ENCODE measurements at regions of chr6 and their contacts with region 1.

Region 1: DNA sequence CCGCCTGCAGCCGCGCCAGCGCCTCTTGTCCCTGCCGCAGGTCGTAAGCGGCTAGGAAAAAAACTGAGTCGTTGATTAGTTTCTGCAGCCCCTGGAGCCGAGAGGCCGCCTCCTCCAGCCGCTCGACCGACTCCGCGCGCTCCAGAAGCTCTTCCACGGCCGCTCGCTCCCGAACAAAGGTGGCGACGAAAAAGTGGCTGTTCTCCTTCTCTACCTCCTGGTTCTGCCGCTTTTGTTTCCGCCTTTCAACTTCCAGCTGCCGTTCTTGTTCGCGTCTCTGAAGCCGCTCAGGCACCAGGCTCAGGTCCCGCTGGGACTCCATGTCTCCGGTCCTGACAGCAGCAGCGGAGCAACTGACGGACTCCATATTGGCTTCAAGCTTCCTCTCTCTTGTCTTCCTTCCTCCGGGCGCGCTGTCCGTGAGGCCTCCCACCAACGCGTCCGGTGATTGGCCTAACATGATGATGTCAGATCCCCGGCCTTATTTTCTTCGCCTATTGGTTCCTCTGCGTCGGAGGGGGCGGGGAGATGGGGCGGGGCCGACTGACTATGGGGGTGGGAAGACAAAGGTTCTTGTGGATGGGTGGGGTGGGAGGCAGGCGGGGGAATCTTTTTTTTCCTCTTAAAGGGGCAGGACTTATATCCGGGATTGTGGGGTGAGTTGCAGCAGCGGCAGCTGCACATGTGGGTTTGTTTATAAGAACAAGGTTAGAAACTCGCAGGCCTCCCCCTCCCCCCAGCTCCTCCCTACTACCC is at the start of gene TBCC:
- DNase-seq: peak; percentile 87 to 98 (median 93)
- ATAC-seq: peak; percentile 82
- H3K4me3 ChIP-seq: peak within 1 kb of the TSS; percentile 76 to 84
- H3K4me3 Mint-ChIP-seq: peak within 1 kb of the TSS; percentile 100
- H3K27ac ChIP-seq: peak within 1 kb of the TSS; percentile 86 to 89
- H3K27ac Mint-ChIP-seq: peak within 1 kb of the TSS; percentile 100
- H3K4me1 ChIP-seq: peaks cover 36% of the 10 kb centered on the region
- H3K4me1 Mint-ChIP-seq: peaks cover 27% of the 10 kb centered on the region
- H3K27me3 ChIP-seq: no peaks in the 10 kb centered on the region
- H3K27me3 Mint-ChIP-seq: no peaks in the 10 kb centered on the region
- CTCF ChIP-seq: no peak
- total RNA-seq, gene TBCC: 70.5 to 74.1 TPM

Region 2: DNA sequence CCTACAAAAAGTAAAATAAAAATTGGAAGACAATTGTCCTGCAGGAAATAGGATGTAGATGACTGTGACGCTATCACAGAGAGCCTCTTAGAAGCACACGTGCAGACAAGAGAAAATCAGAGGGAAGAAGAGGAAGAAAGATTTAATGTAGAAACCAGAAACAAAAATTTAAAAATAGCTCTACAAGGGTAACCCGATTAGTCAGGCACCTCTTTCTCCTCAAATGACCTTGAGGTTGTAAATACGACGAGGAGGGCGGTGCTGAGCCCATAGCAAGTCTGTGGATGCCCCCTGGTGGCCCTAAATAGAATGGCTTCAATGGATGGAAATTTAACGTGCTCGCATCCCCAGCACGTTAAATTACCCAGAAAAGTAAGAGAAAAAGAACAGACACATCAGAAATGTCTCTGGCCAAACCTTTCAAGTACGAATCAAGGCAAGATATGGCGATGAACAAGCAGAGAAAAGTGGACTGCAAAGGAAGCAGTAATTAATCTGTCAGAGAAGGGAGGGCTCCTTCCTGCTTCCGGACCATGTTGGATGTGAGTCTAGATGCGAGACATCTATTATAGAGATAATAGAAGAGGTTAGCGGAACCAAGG is 19.3 kb before region 1 on chr6:
- CTCF ChIA-PET with region 1: interaction called, 27 read pairs
- POLR2A ChIA-PET with region 1: interaction called, 26 read pairs
- intact Hi-C with region 1: loop called (anchors 1 to 2 kb)
- DNase-seq: peak; percentile 29 to 95 (median 76)
- ATAC-seq: peak; percentile 98
- H3K4me3 ChIP-seq: peak overlapping the region; percentile 54 to 73
- H3K4me3 Mint-ChIP-seq: peak overlapping the region; percentile 88
- H3K27ac ChIP-seq: peak overlapping the region; percentile 75 to 85
- H3K27ac Mint-ChIP-seq: peak overlapping the region; percentile 97
- H3K4me1 ChIP-seq: peaks cover 13% of the 10 kb centered on the region
- H3K4me1 Mint-ChIP-seq: peaks cover 17% of the 10 kb centered on the region
- H3K27me3 ChIP-seq: no peaks in the 10 kb centered on the region
- H3K27me3 Mint-ChIP-seq: no peaks in the 10 kb centered on the region
- CTCF ChIP-seq: peak; percentile 88

Region 3: DNA sequence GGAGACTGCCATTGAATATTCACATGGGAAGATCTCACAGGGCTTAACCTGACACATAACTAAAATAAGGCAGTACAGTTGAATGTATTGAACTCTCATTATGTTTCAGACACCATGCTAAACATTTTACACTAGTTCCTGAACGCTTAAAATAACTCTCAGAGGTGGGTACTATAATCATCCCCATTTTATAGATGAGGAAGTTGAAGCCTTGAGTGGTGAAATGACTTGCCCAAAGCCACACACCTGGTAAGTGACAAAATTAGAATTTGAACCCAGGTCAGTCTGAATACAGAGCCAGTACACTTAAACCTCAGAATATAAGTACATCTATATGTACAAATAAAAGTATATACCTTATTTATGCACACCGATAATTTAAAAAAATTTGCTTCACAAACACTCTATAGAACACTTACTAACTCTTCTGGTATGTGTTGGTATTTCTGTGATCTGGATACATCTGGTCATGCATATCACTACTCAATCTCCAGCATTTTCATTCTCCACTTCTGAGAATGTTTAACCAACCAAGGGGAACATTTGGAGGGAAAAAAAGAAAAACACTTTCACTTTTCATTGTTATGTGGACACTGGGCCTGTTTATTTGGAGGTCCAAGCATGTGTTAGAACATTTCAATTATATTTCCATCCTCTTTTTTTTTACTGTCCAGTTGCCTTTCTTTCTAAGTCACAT is 31.4 kb after region 1 on chr6:
- CTCF ChIA-PET with region 1: interaction called, 50 read pairs
- POLR2A ChIA-PET with region 1: interaction called, 372 read pairs
- intact Hi-C with region 1: loop called in 1 of 2 experiments (anchors 1 kb)
- DNase-seq: no peak
- ATAC-seq: no peak
- H3K4me3 ChIP-seq: no peak overlapping the region
- H3K4me3 Mint-ChIP-seq: no peak overlapping the region
- H3K27ac ChIP-seq: peak overlapping the region in 1 of 2 experiments; percentile 43
- H3K27ac Mint-ChIP-seq: peak overlapping the region; percentile 72
- H3K4me1 ChIP-seq: peaks cover 65% of the 10 kb centered on the region
- H3K4me1 Mint-ChIP-seq: peaks cover 66% of the 10 kb centered on the region
- H3K27me3 ChIP-seq: no peaks in the 10 kb centered on the region
- H3K27me3 Mint-ChIP-seq: no peaks in the 10 kb centered on the region
- CTCF ChIP-seq: no peak

Region 4: GRCh38 chr6:42879372-42880239 is 133.7 kb after region 1 on chr6 and contains the start of gene RPL7L1:
- CTCF ChIA-PET with region 1: interaction called, 5 read pairs
- POLR2A ChIA-PET with region 1: interaction called, 44 read pairs
- intact Hi-C with region 1: loop called (anchors 1 kb)
- DNase-seq: peak; percentile 69 to 93 (median 82)
- ATAC-seq: peak; percentile 92
- H3K4me3 ChIP-seq: peak within 1 kb of the TSS; percentile 71 to 83
- H3K4me3 Mint-ChIP-seq: peak within 1 kb of the TSS; percentile 98
- H3K27ac ChIP-seq: peak within 1 kb of the TSS; percentile 92 to 94
- H3K27ac Mint-ChIP-seq: peak within 1 kb of the TSS; percentile 99
- H3K4me1 ChIP-seq: peaks cover 19% of the 10 kb centered on the region
- H3K4me1 Mint-ChIP-seq: peaks cover 27% of the 10 kb centered on the region
- H3K27me3 ChIP-seq: no peaks in the 10 kb centered on the region
- H3K27me3 Mint-ChIP-seq: no peaks in the 10 kb centered on the region
- CTCF ChIP-seq: no peak
- total RNA-seq, gene RPL7L1: 67.9 to 68.6 TPM

Region 5: DNA sequence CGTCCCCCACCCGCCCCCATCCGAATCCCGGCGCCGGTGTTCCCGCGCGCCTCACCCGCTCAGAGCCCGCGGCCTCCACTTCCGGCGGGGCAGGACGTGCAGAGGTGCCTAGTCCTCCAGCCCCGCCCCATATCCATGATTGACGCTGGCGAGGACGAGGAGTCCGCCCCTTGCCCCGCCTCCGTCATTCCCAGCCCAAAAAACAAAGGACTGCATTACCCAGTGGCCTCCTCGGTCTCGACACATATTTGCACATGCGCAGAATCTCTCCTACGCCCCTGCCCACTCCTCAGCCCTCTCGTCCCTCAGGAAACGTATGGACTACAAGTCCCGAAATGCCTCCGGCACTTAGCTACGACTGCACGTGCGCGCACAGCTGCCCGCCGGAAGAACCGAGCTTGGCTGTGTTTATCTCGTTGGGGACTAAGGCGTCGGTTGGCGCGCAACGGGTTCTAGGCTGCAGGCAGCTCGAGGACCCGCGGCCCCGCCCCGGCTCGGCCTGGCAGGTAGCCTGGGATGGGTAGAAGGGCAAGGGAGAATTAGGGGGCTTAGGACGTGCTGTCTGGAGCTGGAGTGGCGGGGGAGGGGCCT is 268.1 kb after region 1 on chr6 and contains the starts of genes KLHDC3 and MEA1:
- CTCF ChIA-PET with region 1: no interaction called
- POLR2A ChIA-PET with region 1: no interaction called
- intact Hi-C with region 1: loop called in 1 of 2 experiments (anchors 1 kb)
- DNase-seq: peak; percentile 95 to 100 (median 98)
- ATAC-seq: peak; percentile 96
- H3K4me3 ChIP-seq: peak within 1 kb of the TSS; percentile 79 to 84
- H3K4me3 Mint-ChIP-seq: peak within 1 kb of the TSS; percentile 95
- H3K27ac ChIP-seq: peak within 1 kb of the TSS; percentile 60 to 74
- H3K27ac Mint-ChIP-seq: peak within 1 kb of the TSS; percentile 94
- H3K4me1 ChIP-seq: peaks cover 29% of the 10 kb centered on the region
- H3K4me1 Mint-ChIP-seq: peaks cover 63% of the 10 kb centered on the region
- H3K27me3 ChIP-seq: no peaks in the 10 kb centered on the region
- H3K27me3 Mint-ChIP-seq: no peaks in the 10 kb centered on the region
- CTCF ChIP-seq: no peak
- total RNA-seq, gene KLHDC3: 20.9 to 21.7 TPM
- total RNA-seq, gene MEA1: 14.5 to 15.3 TPM

Region 6: DNA sequence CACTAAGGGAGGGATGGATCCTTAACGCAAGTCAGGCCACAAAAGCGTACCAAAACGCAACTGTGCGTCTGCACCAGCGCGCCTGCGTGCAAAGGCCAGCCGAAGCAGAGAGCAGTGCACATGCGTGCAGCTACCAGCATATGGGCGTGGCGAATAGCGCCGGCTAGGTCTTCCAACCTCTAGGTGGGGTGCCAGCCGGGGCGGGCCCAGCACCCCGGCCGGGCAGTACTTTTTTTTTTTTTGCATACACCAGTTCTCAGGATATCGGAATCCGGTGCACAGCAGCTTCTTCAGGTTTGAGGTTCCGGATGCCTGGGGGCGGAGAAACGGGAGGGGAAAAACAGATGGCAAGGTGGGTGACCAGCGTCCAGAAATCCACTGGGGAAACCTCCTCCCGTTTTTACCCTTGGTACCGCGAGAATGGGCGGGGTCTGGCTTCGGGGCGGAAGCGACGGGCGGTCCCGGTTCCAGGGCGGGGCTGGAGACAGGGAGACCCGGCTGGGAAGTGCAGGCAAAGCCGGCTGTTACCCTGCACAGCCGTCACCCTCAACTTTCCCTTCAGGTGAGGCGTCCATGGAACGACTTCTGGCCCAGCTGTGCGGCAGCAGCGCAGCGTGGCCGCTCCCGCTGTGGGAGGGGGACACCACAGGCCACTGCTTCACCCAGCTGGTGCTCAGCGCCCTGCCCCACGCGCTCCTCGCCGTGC is 681.7 kb after region 1 on chr6 and contains the start of gene ABCC10:
- CTCF ChIA-PET with region 1: no interaction called
- POLR2A ChIA-PET with region 1: no interaction called
- intact Hi-C with region 1: loop called in 1 of 2 experiments (anchors 5 kb)
- DNase-seq: peak; percentile 89 to 98 (median 94)
- ATAC-seq: peak; percentile 94
- H3K4me3 ChIP-seq: peak within 1 kb of the TSS; percentile 78 to 91
- H3K4me3 Mint-ChIP-seq: peak within 1 kb of the TSS; percentile 94
- H3K27ac ChIP-seq: peak within 1 kb of the TSS; percentile 80 to 84
- H3K27ac Mint-ChIP-seq: peak within 1 kb of the TSS; percentile 98
- H3K4me1 ChIP-seq: peaks cover 11% of the 10 kb centered on the region
- H3K4me1 Mint-ChIP-seq: peaks cover 30% of the 10 kb centered on the region
- H3K27me3 ChIP-seq: no peaks in the 10 kb centered on the region
- H3K27me3 Mint-ChIP-seq: no peaks in the 10 kb centered on the region
- CTCF ChIP-seq: no peak
- total RNA-seq, gene ABCC10: 39.7 to 45.5 TPM

Measured in CD8-positive, alpha-beta T cell (primary cell).